CD14-positive monocyte (primary cell): ENCODE measurements at regions of chr2 and their contacts with region 1.

Region 1: GRCh38 chr2:55175254-55176025 is 56.7 kb downstream of the CLHC1 start:
- DNase-seq: peak; percentile 35 to 59 (median 56)
- H3K4me3 ChIP-seq: no peak overlapping the region
- H3K4me3 Mint-ChIP-seq: no peak overlapping the region
- H3K27ac ChIP-seq: no peak overlapping the region
- H3K27ac Mint-ChIP-seq: no peak overlapping the region
- H3K4me1 ChIP-seq: no peaks in the 10 kb centered on the region
- H3K4me1 Mint-ChIP-seq: peaks cover 6% of the 10 kb centered on the region
- H3K27me3 ChIP-seq: no peaks in the 10 kb centered on the region
- H3K27me3 Mint-ChIP-seq: peaks cover 0 to 2% (median 0%) of the 10 kb centered on the region in 3 donors
- CTCF ChIP-seq: peak; percentile 76

Region 2: DNA sequence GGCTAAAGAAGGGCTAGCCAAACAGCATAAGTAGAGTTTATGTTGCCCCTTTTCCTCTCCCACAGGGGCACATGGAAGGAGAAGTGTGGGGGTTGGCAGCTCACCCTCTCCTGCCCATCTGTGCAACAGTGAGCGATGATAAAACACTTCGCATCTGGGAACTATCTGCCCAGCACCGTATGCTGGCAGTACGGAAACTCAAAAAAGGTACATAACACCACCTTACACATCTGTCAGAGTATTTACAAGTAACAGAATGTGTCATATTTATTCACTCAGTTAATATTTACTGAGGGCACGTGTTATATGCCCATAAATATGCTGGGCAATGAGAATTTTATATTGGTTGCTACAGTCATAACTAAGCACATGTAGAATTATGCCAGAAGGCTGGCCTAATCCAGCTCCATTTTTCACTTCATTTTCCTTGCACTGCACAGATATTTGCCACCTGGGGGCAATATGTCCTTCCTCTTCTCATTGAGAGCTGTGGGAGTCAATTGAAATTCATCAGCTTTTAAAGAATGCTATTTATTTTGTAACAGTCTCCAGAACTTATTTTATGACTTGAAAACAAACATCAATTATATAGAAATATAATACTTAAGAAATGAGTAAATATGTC is 275.8 kb before region 1 on chr2:
- intact Hi-C with region 1: loop called in 1 of 2 experiments (anchors 5 kb)
- DNase-seq: peak in 1 of 3 donors; percentile 8
- H3K4me3 ChIP-seq: no peak overlapping the region
- H3K4me3 Mint-ChIP-seq: no peak overlapping the region
- H3K27ac ChIP-seq: no peak overlapping the region
- H3K27ac Mint-ChIP-seq: no peak overlapping the region
- H3K4me1 ChIP-seq: peaks cover 8 to 13% of the 10 kb centered on the region in 2 donors
- H3K4me1 Mint-ChIP-seq: peaks cover 14% of the 10 kb centered on the region
- H3K27me3 ChIP-seq: no peaks in the 10 kb centered on the region
- H3K27me3 Mint-ChIP-seq: peaks cover 0 to 4% (median 0%) of the 10 kb centered on the region in 3 donors
- CTCF ChIP-seq: peak; percentile 26

Region 3: GRCh38 chr2:55133467-55134315 is 41.7 kb before region 1 on chr2:
- intact Hi-C with region 1: no loop called
- DNase-seq: peak; percentile 92 to 99 (median 96)
- H3K4me3 ChIP-seq: peak overlapping the region; percentile 46 to 97 (median 75)
- H3K4me3 Mint-ChIP-seq: peak overlapping the region; percentile 81 to 84
- H3K27ac ChIP-seq: peak overlapping the region; percentile 82 to 94
- H3K27ac Mint-ChIP-seq: peak overlapping the region; percentile 96 to 99 (median 98)
- H3K4me1 ChIP-seq: peaks cover 56 to 58% of the 10 kb centered on the region in 2 donors
- H3K4me1 Mint-ChIP-seq: peaks cover 55% of the 10 kb centered on the region
- H3K27me3 ChIP-seq: no peaks in the 10 kb centered on the region
- H3K27me3 Mint-ChIP-seq: peaks cover 0 to 2% (median 1%) of the 10 kb centered on the region in 3 donors
- CTCF ChIP-seq: no peak

Region 4: DNA sequence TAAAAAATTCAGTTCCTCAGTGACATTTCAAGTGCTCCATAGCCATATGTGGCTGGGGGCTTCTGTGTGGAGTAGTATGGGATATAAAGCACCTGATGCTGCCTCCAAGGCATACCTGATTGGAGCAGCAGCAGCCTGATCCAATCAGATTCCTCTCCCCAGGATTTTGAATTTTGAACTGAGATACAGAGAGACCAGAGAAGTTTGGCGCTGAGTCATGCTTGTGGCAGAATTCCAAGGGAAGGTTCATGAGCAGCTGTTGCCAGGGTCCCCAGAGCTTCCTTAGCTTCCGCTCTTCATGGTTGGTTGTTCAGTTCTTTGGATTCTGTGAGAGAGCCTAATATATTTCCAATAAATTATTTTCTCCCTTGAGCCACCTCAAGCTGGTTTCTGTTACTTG is 315.1 kb after region 1 on chr2:
- intact Hi-C with region 1: no loop called
- DNase-seq: no peak
- H3K4me3 ChIP-seq: no peak overlapping the region
- H3K4me3 Mint-ChIP-seq: no peak overlapping the region
- H3K27ac ChIP-seq: no peak overlapping the region
- H3K27ac Mint-ChIP-seq: no peak overlapping the region
- H3K4me1 ChIP-seq: no peaks in the 10 kb centered on the region
- H3K4me1 Mint-ChIP-seq: peaks cover 4% of the 10 kb centered on the region
- H3K27me3 ChIP-seq: no peaks in the 10 kb centered on the region
- H3K27me3 Mint-ChIP-seq: no peaks in the 10 kb centered on the region
- CTCF ChIP-seq: no peak